ENCODE measurements at regions of chr9 and their contacts with region 1.

Region 1: GRCh38 chr9:31486630-31487029 is 897.8 kb upstream of the ACO1 start:
- DNase-seq: no peak
- ATAC-seq: no peak
- H3K4me3 ChIP-seq: no peak overlapping the region
- H3K27ac ChIP-seq: no peak overlapping the region
- H3K4me1 ChIP-seq: no peaks in the 10 kb centered on the region
- H3K27me3 ChIP-seq: no peaks in the 10 kb centered on the region

Region 2: GRCh38 chr9:31535651-31536050 is 49.0 kb after region 1 on chr9:
- intact Hi-C with region 1: loop called in 1 of 2 experiments (anchors 10 kb)
- DNase-seq: no peak
- ATAC-seq: no peak
- H3K4me3 ChIP-seq: no peak overlapping the region
- H3K27ac ChIP-seq: no peak overlapping the region
- H3K4me1 ChIP-seq: no peaks in the 10 kb centered on the region
- H3K27me3 ChIP-seq: no peaks in the 10 kb centered on the region

Region 3: GRCh38 chr9:31715250-31715649 is 228.6 kb after region 1 on chr9:
- intact Hi-C with region 1: no loop called
- DNase-seq: no peak
- ATAC-seq: no peak
- H3K4me3 ChIP-seq: no peak overlapping the region
- H3K27ac ChIP-seq: no peak overlapping the region
- H3K4me1 ChIP-seq: no peaks in the 10 kb centered on the region
- H3K27me3 ChIP-seq: no peaks in the 10 kb centered on the region

Measured in aorta (tissue), 5 donors.